ENCODE measurements at regions of chr10 and their contacts with region 1.

Region 1: DNA sequence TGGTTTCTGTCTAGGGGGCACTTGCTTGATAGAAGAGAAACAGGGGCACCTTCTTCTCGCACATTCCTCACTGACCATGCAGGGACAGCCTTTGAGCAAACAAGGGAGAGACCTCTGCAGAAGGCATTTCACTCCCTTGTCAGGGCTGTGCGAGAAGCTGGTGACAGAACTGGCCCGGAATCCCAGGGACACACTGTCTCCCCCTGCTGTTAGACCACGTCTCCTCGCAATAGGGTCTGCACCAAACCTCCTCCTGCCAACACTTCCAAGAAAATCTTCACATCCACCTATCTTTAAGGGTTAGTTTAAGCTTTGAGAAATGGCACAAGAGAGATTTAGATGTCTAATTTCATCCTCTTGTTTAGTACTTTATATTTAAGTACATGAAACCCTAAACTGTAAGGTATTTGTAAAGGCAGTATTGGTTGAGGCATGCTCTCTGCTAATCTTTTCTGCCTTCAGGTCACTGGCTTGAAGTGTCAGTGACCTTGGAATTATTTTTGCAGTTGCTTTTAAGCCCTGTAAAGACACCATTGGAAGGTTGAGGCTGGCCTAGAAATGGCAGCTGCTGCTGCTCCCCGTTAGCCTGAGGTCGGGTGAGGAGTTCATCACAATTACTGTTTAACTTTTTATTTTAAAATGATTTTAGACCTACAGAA is 37.0 kb downstream of the RBM20 start:
- DNase-seq: peak in 1 of 2 donors; percentile 56
- ATAC-seq: peak; percentile 51 to 52
- H3K4me3 ChIP-seq: no peak overlapping the region
- H3K27ac ChIP-seq: peak overlapping the region; percentile 81 to 88 (median 84)
- H3K4me1 ChIP-seq: peaks cover 23 to 28% of the 10 kb centered on the region in 2 donors
- H3K27me3 ChIP-seq: no peaks in the 10 kb centered on the region
- CTCF ChIP-seq: peak; percentile 32 to 76 (median 58)
- POLR2A ChIP-seq: no peak

Region 2: DNA sequence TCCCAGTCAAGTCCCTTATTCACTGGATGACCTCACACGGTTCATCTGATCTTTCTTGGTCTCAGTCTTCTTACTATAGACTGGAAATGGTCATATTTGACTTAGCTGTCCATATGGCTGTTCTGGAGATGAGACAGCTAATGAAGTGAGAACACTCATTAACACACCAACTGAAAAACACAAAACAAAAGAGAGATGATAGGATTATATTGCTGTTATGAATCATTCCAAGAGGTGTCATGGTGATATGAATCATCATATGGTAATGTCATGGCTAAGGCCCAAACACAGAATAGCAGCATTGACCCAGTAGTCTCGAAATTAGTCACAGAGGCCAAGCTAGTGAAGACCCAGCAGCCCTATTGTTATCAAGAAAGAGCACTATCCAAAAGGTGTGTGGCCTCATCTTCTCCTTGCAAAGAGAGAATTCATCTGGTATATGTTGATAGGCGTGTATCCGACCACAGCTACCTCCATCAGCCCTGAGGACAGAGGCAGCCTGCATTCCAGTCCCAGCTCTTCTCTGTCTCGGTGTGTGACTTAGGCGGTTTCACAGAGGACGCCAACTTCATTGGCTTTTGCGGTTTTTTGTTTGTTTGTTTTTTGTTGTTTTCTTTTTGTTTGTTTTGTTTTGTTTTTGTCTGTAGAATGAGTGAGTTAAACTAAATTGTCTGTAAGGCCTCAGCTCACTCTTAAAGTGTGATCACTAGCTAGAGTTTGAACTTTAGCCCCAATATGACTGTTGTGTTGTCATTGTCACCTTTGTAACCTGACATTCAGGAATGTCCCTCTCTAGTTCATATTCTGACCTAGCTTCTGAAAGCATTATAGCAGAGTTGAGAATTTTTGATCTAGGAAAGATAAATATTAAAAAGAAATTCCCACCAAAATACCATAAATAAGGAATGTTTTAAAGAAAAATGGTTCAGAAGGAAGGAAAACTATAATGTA is 93.2 kb after region 1 on chr10:
- in situ Hi-C with region 1: no loop called
- intact Hi-C with region 1: loop called (anchors 5 kb)
- DNase-seq: no peak
- ATAC-seq: peak; percentile 53 to 82
- H3K4me3 ChIP-seq: no peak overlapping the region
- H3K27ac ChIP-seq: peak overlapping the region; percentile 50 to 71 (median 64)
- H3K4me1 ChIP-seq: peaks cover 45 to 54% of the 10 kb centered on the region in 2 donors
- H3K27me3 ChIP-seq: no peaks in the 10 kb centered on the region
- CTCF ChIP-seq: no peak
- POLR2A ChIP-seq: no peak

Region 3: GRCh38 chr10:110883924-110884323 is 202.8 kb after region 1 on chr10:
- in situ Hi-C with region 1: no loop called
- intact Hi-C with region 1: no loop called
- DNase-seq: no peak
- ATAC-seq: no peak
- H3K4me3 ChIP-seq: no peak overlapping the region
- H3K27ac ChIP-seq: no peak overlapping the region
- H3K4me1 ChIP-seq: peaks cover 0 to 7% of the 10 kb centered on the region in 2 donors
- H3K27me3 ChIP-seq: no peaks in the 10 kb centered on the region
- CTCF ChIP-seq: no peak
- POLR2A ChIP-seq: no peak

Measured in gastrocnemius medialis (tissue), 4 donors.